ENCODE measurements at regions of chr9 and their contacts with region 1.

Region 1: GRCh38 chr9:75723560-75723959 is 166.9 kb upstream of the PCSK5 start:
- DNase-seq: no peak
- H3K4me3 ChIP-seq: no peak overlapping the region
- H3K27ac ChIP-seq: no peak overlapping the region
- H3K4me1 ChIP-seq: no peaks in the 10 kb centered on the region
- H3K27me3 ChIP-seq: peaks cover 3% of the 10 kb centered on the region
- CTCF ChIP-seq: no peak

Region 2: DNA sequence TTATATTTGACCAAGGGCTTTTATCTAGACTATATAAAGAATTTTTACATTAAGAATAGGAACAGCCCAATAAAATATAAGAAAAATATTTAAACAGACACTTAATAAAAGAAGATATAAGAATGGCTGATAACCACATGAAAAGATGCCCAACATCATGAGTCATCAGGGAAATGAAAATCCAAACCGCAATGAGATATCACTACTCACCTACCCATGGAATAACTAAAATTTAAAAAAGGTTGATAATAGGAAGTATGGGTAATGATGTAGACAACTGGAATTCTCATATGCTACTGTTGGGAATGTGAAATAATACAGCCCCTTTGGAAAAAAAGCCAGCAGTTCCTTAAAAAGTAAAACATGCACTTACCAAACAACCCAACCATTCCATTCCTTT is 40.0 kb before region 1 on chr9:
- CTCF ChIA-PET with region 1: no interaction called
- POLR2A ChIA-PET with region 1: no interaction called
- intact Hi-C with region 1: loop called (anchors 5 kb)
- DNase-seq: no peak
- H3K4me3 ChIP-seq: no peak overlapping the region
- H3K27ac ChIP-seq: no peak overlapping the region
- H3K4me1 ChIP-seq: no peaks in the 10 kb centered on the region
- H3K27me3 ChIP-seq: no peaks in the 10 kb centered on the region
- CTCF ChIP-seq: no peak

Region 3: DNA sequence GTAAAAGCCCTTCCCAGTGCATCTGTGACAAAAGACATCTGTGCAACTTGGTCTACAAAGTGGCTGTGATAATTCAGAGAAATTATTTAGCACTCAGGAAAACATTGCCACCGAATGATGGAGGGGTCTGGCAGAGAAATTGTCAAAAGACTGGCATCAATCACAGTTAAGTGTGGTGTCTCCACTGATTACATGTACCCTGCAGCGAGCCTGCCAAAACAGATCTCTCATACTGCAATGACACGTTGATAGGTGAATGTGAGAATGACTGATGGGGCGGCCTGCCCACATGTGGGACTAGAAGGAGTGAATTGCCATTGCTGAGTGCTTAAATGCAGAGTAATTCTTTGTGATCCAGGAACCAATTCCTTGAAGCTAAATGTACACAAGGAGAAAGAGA is 30.5 kb after region 1 on chr9:
- CTCF ChIA-PET with region 1: no interaction called
- POLR2A ChIA-PET with region 1: no interaction called
- intact Hi-C with region 1: loop called (anchors 2 kb)
- DNase-seq: no peak
- H3K4me3 ChIP-seq: no peak overlapping the region
- H3K27ac ChIP-seq: no peak overlapping the region
- H3K4me1 ChIP-seq: no peaks in the 10 kb centered on the region
- H3K27me3 ChIP-seq: no peaks in the 10 kb centered on the region
- CTCF ChIP-seq: no peak